CD4-positive, alpha-beta memory T cell (primary cell): ENCODE measurements at regions of chr20 and their contacts with region 1.

Region 1: GRCh38 chr20:956330-956951 is 40.3 kb upstream of the ANGPT4 start:
- DNase-seq: peak; percentile 62 to 74 (median 64)
- H3K4me3 ChIP-seq: no peak overlapping the region
- H3K4me3 Mint-ChIP-seq: no peak overlapping the region
- H3K27ac ChIP-seq: no peak overlapping the region
- H3K27ac Mint-ChIP-seq: no peak overlapping the region
- H3K4me1 ChIP-seq: no peaks in the 10 kb centered on the region
- H3K4me1 Mint-ChIP-seq: peaks cover 0 to 3% (median 1%) of the 10 kb centered on the region in 4 donors
- H3K27me3 ChIP-seq: peaks cover 3% of the 10 kb centered on the region
- H3K27me3 Mint-ChIP-seq: peaks cover 18 to 39% of the 10 kb centered on the region in 2 donors

Region 2: GRCh38 chr20:805713-806112 is 150.7 kb before region 1 on chr20:
- CTCF ChIA-PET with region 1: interaction called, 23 read pairs
- POLR2A ChIA-PET with region 1: no interaction called
- intact Hi-C with region 1: no loop called
- DNase-seq: no peak
- H3K4me3 ChIP-seq: no peak overlapping the region
- H3K4me3 Mint-ChIP-seq: no peak overlapping the region
- H3K27ac ChIP-seq: no peak overlapping the region
- H3K27ac Mint-ChIP-seq: no peak overlapping the region
- H3K4me1 ChIP-seq: no peaks in the 10 kb centered on the region
- H3K4me1 Mint-ChIP-seq: no peaks in the 10 kb centered on the region
- H3K27me3 ChIP-seq: no peaks in the 10 kb centered on the region
- H3K27me3 Mint-ChIP-seq: peaks cover 14 to 19% of the 10 kb centered on the region in 2 donors

Region 3: GRCh38 chr20:815914-816606 is 140.4 kb before region 1 on chr20:
- CTCF ChIA-PET with region 1: interaction called, 239 read pairs
- POLR2A ChIA-PET with region 1: interaction called, 7 read pairs
- intact Hi-C with region 1: no loop called
- DNase-seq: peak; percentile 59 to 67 (median 64)
- H3K4me3 ChIP-seq: no peak overlapping the region
- H3K4me3 Mint-ChIP-seq: no peak overlapping the region
- H3K27ac ChIP-seq: no peak overlapping the region
- H3K27ac Mint-ChIP-seq: peak overlapping the region in 3 of 7 donors; percentile 65 to 86 (median 65)
- H3K4me1 ChIP-seq: no peaks in the 10 kb centered on the region
- H3K4me1 Mint-ChIP-seq: peaks cover 3 to 5% (median 4%) of the 10 kb centered on the region in 4 donors
- H3K27me3 ChIP-seq: no peaks in the 10 kb centered on the region
- H3K27me3 Mint-ChIP-seq: peaks cover 15 to 18% of the 10 kb centered on the region in 2 donors

Region 4: DNA sequence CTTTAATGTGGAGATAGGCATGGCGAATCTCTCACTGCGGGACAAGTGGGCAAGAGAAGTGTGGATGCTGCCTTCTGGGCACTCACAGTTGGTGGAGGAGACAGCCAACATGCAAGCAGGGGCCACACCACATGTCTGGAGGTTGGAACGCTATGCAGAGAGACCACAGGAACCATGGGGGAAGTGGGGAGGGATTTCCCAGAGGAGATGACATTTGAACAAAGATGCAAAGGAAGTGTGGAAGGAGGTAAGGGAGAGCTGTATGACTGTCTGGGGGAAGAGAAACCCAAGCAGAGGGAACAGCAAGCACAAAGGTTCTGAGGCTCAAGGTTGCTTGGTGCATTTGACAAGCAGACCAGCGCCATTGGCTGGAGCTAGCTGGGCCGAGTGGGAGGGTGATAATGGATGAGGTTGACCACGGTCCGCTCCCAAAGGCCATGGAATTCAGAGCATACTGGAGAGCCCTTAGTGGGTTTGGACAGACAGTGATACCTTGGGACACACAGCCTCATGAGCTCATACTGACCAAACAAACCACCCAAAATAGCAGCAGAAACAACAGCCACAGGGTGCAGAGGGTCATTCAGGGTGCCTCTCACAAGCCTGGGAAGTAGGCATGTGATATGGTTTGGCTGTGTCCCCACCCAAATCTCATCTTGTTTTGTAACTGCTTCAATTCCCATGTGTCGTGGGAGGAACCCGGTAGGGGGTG is 130.6 kb before region 1 on chr20:
- CTCF ChIA-PET with region 1: interaction called, 10 read pairs
- POLR2A ChIA-PET with region 1: no interaction called
- intact Hi-C with region 1: no loop called
- DNase-seq: peak in 1 of 5 donors; percentile 14
- H3K4me3 ChIP-seq: no peak overlapping the region
- H3K4me3 Mint-ChIP-seq: no peak overlapping the region
- H3K27ac ChIP-seq: no peak overlapping the region
- H3K27ac Mint-ChIP-seq: no peak overlapping the region
- H3K4me1 ChIP-seq: no peaks in the 10 kb centered on the region
- H3K4me1 Mint-ChIP-seq: no peaks in the 10 kb centered on the region
- H3K27me3 ChIP-seq: no peaks in the 10 kb centered on the region
- H3K27me3 Mint-ChIP-seq: no peaks in the 10 kb centered on the region